ENCODE measurements at regions of chr7 and their contacts with region 1.

Region 1: GRCh38 chr7:76179686-76180085 is 22.0 kb upstream of the SRRM3 start:
- DNase-seq: no peak
- H3K4me3 ChIP-seq: no peak overlapping the region
- CTCF ChIP-seq: no peak

Region 2: DNA sequence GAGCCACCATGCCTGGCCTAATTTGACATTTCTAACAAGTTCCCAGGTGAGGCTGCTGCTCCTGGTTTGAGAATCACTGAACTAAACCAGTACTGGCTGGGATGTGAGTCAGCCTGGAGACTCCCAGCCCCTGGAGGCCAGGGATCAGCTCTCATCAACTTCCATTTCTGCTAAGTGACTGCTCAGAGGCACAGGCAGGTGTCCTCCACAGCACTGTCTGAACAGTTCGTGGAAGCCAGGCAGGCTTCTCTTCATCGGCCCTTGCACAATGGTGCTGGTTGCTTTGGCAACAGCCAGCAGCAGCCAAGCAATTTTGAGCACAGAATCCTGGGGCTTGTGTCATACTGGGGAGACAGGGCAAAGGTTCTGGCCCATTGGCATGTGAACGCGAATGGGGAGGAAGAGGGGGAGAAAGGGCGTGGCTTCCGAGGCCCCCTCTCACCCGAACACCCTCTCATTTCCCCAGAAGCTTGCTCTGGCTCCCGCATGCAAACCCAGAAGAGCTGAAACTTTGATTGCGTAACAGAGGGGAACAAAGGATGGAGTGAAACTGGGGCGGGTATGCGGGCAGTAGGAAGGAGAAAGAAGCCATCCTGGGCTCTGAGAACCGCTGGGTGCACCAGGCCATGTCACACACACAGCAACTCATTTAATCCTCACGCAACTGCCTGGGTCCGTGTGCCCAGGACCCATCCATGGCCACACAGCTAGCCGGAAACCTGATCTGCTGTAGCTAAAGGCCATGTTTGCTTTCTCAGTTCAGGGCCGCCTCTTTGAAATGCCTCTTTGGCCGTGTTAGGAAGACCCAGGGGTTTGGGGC is 273.7 kb before region 1 on chr7:
- CTCF ChIA-PET with region 1: no interaction called
- POLR2A ChIA-PET with region 1: no interaction called
- DNase-seq: no peak
- H3K4me3 ChIP-seq: no peak overlapping the region
- CTCF ChIP-seq: no peak

Region 3: GRCh38 chr7:76069238-76069638 is 110.4 kb before region 1 on chr7:
- CTCF ChIA-PET with region 1: no interaction called
- POLR2A ChIA-PET with region 1: no interaction called
- DNase-seq: peak; percentile 89
- H3K4me3 ChIP-seq: no peak overlapping the region
- CTCF ChIP-seq: peak; percentile 47

Region 4: GRCh38 chr7:76166404-76167255 is 13.1 kb before region 1 on chr7:
- CTCF ChIA-PET with region 1: interaction called, 66 read pairs
- POLR2A ChIA-PET with region 1: interaction called, 5 read pairs
- DNase-seq: peak; percentile 37
- H3K4me3 ChIP-seq: peak overlapping the region; percentile 78
- CTCF ChIP-seq: peak; percentile 0

Region 5: DNA sequence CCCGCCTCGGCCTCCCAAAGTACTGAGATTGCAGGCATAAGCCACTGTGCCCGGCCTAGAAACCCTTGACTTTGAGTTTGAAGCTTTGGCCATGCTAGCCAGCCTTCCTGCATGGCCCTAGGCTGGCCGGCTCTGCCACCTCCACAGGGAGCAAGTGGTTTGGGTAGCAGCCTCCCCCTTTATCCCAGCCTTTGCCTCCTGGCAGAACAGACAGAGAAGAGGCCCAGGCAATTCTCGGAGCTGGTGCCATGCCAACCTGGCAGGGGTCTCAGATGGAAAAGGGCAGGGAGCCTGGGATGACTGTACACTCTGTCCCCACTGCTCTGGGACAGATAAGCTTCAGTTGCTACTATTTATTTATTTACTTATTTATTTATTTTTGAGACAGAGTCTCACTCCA is 61.5 kb after region 1 on chr7:
- CTCF ChIA-PET with region 1: no interaction called
- POLR2A ChIA-PET with region 1: no interaction called
- DNase-seq: no peak
- H3K4me3 ChIP-seq: no peak overlapping the region
- CTCF ChIP-seq: no peak

Region 6: DNA sequence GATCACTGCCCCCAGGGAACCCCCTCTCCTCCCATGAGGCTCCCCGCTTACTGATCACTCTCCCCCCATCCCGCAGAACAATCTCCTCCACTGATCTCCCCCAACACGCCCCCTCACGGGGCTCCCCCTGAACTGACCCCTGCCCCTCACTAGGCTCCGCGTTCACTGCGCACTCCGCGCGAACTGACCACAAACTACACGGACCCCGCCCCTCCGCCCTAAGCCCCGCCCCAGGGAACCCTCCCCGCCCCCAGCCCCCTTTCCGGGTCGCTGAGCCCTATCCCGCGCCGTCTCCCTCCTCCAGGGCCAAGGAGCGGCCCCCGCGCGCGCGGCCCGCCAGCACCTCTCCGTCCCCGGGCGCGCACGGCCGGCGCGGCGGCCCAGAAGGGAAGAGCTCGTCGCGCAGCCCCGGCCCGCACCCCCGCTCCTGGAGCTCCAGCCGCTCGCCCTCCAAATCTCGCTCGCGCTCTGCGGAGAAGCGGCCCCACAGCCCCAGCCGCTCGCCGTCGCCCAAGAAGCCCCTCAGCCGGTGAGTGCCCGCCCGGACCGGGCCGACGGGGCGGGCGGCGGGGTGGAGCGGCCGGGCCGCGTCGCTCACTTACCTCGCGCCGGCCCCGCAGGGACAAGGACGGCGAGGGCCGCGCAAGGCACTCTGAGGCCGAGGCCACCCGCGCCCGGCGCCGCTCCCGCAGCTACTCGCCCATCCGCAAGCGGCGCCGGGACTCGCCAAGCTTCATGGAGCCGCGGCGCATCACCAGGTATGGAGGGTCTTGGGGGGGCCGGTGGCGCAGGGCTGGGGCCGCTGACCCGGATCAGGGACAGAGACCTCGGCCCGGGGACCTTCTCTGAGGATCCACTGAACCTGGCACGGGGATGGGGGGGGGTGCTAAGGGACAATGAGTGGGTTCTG is 102.9 kb after region 1 on chr7:
- CTCF ChIA-PET with region 1: interaction called, 35 read pairs
- POLR2A ChIA-PET with region 1: interaction called, 4 read pairs
- DNase-seq: no peak
- H3K4me3 ChIP-seq: peak overlapping the region; percentile 41
- CTCF ChIP-seq: no peak

Region 7: DNA sequence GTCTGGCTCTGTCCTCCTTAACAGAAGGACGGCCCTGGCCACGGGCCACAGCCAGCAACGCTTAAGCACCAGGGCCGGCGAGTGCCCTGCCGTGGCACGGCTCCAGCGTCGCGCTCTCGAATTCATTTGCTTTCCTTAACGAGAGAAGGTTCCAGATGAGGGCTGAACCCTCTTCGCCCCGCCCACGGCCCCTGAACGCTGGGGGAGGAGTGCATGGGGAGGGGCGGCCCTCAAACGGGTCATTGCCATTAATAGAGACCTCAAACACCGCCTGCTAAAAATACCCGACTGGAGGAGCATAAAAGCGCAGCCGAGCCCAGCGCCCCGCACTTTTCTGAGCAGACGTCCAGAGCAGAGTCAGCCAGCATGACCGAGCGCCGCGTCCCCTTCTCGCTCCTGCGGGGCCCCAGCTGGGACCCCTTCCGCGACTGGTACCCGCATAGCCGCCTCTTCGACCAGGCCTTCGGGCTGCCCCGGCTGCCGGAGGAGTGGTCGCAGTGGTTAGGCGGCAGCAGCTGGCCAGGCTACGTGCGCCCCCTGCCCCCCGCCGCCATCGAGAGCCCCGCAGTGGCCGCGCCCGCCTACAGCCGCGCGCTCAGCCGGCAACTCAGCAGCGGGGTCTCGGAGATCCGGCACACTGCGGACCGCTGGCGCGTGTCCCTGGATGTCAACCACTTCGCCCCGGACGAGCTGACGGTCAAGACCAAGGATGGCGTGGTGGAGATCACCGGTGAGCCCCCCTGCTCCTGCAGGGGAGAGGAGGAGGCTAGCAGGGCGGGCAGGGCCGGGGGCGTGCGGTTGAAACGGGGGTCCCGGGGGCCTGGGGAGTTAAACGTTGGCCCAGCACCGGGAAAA is 122.9 kb after region 1 on chr7 and contains the start of gene HSPB1:
- CTCF ChIA-PET with region 1: interaction called, 345 read pairs
- POLR2A ChIA-PET with region 1: interaction called, 3 read pairs
- DNase-seq: no peak
- H3K4me3 ChIP-seq: peak within 1 kb of the TSS; percentile 97
- CTCF ChIP-seq: no peak

Region 8: DNA sequence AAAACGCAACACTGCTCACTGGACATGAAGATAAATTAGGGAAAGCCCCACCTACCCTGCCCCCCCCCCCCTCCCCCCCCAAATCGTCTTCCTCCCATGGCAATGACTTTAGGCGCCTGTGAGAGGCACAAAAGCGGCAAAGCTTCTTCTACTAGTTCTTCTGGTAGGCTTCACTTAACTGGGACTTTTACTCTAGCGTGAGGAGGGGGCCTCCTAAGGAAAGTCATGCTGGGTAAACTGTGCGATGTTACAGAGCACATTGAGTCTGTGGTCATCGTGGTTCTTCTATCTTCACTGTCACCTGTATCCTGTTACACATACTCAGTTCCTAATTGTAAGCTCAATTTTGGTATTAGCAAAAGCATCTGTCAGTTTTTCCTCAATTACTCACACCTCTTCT is 147.9 kb after region 1 on chr7:
- CTCF ChIA-PET with region 1: interaction called, 12 read pairs
- POLR2A ChIA-PET with region 1: no interaction called
- DNase-seq: no peak
- H3K4me3 ChIP-seq: no peak overlapping the region
- CTCF ChIP-seq: no peak

Measured in AG04449 (cell line).